ENCODE measurements at regions of chr5 and their contacts with region 1.

Region 1: GRCh38 chr5:60677844-60678664 is 21.9 kb downstream of the DEPDC1B start:
- DNase-seq: peak; percentile 37
- H3K4me3 ChIP-seq: no peak overlapping the region
- H3K27ac ChIP-seq: no peak overlapping the region
- H3K4me1 ChIP-seq: no peaks in the 10 kb centered on the region
- H3K27me3 ChIP-seq: no peaks in the 10 kb centered on the region
- CTCF ChIP-seq: peak; percentile 50 to 58

Region 2: GRCh38 chr5:60613826-60614225 is 64.2 kb before region 1 on chr5:
- CTCF ChIA-PET with region 1: no interaction called
- dilution Hi-C with region 1: no loop called
- in situ Hi-C with region 1: no loop called
- intact Hi-C with region 1: no loop called
- DNase-seq: no peak
- H3K4me3 ChIP-seq: no peak overlapping the region
- H3K27ac ChIP-seq: no peak overlapping the region
- H3K4me1 ChIP-seq: peaks cover 3% of the 10 kb centered on the region
- H3K27me3 ChIP-seq: no peaks in the 10 kb centered on the region
- CTCF ChIP-seq: no peak

Region 3: GRCh38 chr5:60843936-60844905 is 166.2 kb after region 1 on chr5 and contains the start of gene ELOVL7:
- CTCF ChIA-PET with region 1: no interaction called
- dilution Hi-C with region 1: no loop called
- in situ Hi-C with region 1: loop called in 1 of 2 experiments (anchors 25 kb)
- intact Hi-C with region 1: loop called (anchors 1 kb)
- DNase-seq: peak; percentile 83
- H3K4me3 ChIP-seq: peak within 1 kb of the TSS; percentile 78 to 93 (median 79)
- H3K27ac ChIP-seq: peak within 1 kb of the TSS; percentile 85
- H3K4me1 ChIP-seq: peaks cover 8% of the 10 kb centered on the region
- H3K27me3 ChIP-seq: no peaks in the 10 kb centered on the region
- CTCF ChIP-seq: peak; percentile 5 to 60
- total RNA-seq, gene ELOVL7: 17.8 to 21.0 TPM

Region 4: DNA sequence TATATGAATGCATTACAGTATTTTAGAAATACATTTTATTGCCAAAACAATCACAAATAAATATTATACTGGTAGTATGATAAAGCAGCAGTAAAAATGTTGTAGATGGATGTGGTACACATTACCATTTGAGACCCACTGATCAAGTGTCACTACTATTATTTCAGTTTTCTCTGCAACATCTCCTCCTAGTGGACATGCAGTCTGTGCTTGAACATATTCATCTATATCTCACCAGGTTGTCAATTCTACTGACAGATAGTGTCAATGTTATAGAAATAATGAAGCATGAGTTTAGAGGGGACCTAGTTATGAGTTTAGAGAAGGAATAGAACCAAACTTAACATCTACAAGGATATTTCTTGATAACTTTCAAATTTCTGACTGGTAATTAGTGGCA is 205.2 kb after region 1 on chr5:
- CTCF ChIA-PET with region 1: no interaction called
- dilution Hi-C with region 1: no loop called
- in situ Hi-C with region 1: loop called in 1 of 2 experiments (anchors 25 kb)
- intact Hi-C with region 1: loop called (anchors 1 kb)
- DNase-seq: peak; percentile 5
- H3K4me3 ChIP-seq: no peak overlapping the region
- H3K27ac ChIP-seq: no peak overlapping the region
- H3K4me1 ChIP-seq: no peaks in the 10 kb centered on the region
- H3K27me3 ChIP-seq: no peaks in the 10 kb centered on the region
- CTCF ChIP-seq: peak; percentile 60 to 73

Region 5: GRCh38 chr5:60929024-60929423 is 251.0 kb after region 1 on chr5:
- CTCF ChIA-PET with region 1: no interaction called
- dilution Hi-C with region 1: no loop called
- in situ Hi-C with region 1: no loop called
- intact Hi-C with region 1: loop called (anchors 2 kb)
- DNase-seq: no peak
- H3K4me3 ChIP-seq: no peak overlapping the region
- H3K27ac ChIP-seq: no peak overlapping the region
- H3K4me1 ChIP-seq: no peaks in the 10 kb centered on the region
- H3K27me3 ChIP-seq: no peaks in the 10 kb centered on the region
- CTCF ChIP-seq: peak; percentile 20 to 38

Region 6: GRCh38 chr5:60944904-60945812 is 267.1 kb after region 1 on chr5 and contains the starts of genes ERCC8 and NDUFAF2:
- CTCF ChIA-PET with region 1: no interaction called
- dilution Hi-C with region 1: no loop called
- in situ Hi-C with region 1: no loop called
- intact Hi-C with region 1: loop called (anchors 1 kb)
- DNase-seq: peak; percentile 90
- H3K4me3 ChIP-seq: peak within 1 kb of the TSS; percentile 67 to 89 (median 79)
- H3K27ac ChIP-seq: peak within 1 kb of the TSS; percentile 63
- H3K4me1 ChIP-seq: peaks cover 5% of the 10 kb centered on the region
- H3K27me3 ChIP-seq: no peaks in the 10 kb centered on the region
- CTCF ChIP-seq: no peak
- total RNA-seq, gene ERCC8: 11.9 to 26.0 TPM
- total RNA-seq, gene NDUFAF2: 16.0 to 71.6 TPM

Region 7: DNA sequence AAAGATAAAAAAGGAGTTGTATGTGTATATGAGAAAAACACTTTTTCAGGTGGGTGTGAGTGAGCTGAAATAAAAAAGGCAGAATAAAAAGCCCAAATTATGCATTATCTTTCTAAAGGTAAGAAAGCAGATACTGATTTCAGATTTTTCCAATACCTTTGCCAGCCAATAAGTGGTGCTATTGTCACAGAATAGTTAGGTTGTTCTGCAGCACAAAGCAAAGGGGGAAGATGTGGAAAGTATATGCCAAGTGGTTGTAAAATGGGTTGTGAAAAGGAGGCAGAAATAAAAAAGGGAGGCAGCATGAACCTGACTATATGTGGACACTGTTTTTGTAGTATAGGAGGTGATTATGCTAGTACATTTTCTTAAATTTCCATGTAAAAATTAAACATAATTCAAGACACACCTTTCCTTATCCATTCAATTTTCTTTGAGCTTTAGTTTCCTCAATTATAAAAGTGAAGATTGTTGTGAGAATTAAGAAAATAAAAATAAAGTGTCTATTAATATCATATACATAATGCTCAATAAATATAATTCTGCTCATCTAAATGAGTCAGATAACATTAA is 377.5 kb after region 1 on chr5:
- CTCF ChIA-PET with region 1: no interaction called
- dilution Hi-C with region 1: no loop called
- in situ Hi-C with region 1: no loop called
- intact Hi-C with region 1: loop called (anchors 10 kb)
- DNase-seq: peak; percentile 40
- H3K4me3 ChIP-seq: no peak overlapping the region
- H3K27ac ChIP-seq: no peak overlapping the region
- H3K4me1 ChIP-seq: peaks cover 34% of the 10 kb centered on the region
- H3K27me3 ChIP-seq: no peaks in the 10 kb centered on the region
- CTCF ChIP-seq: peak; percentile 73 to 85